ENCODE measurements at regions of chr18 and their contacts with region 1.

Region 1: DNA sequence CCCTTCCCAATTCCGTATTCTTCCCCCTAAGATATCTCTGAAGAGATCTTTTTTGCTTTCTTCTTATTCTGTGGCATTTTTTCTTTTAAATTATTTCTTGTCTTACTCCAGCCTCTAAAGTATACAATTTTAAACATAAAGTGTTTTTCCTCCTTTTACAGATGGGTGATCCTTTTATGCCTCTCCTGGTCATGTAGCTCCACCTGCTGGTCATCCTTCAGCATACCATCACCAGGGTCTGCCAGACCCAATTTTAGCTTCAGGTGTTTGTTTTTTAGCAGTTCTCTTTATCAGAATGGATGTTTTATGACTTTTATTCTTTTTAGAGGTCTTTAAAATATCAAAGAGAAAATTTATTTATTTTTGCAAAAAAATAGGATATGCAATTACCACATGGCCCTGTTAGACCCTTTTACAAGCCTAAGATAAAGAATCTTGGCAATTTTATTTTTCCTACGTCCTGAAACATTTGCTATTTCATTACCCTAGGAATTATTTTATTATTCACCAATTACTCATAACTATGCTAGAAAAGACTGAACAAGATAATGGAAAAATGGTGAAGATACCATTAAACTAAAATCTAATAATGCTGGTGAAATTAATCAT is 55.5 kb downstream of the PIGN start:
- DNase-seq: peak; percentile 63
- H3K4me3 Mint-ChIP-seq: no peak overlapping the region
- H3K27ac Mint-ChIP-seq: no peak overlapping the region
- H3K4me1 Mint-ChIP-seq: peaks cover 7% of the 10 kb centered on the region
- H3K27me3 Mint-ChIP-seq: no peaks in the 10 kb centered on the region

Region 2: GRCh38 chr18:61581578-61582201 is 549.7 kb before region 1 on chr18:
- CTCF ChIA-PET with region 1: interaction called, 18 read pairs
- POLR2A ChIA-PET with region 1: no interaction called
- DNase-seq: peak; percentile 62
- H3K4me3 Mint-ChIP-seq: no peak overlapping the region
- H3K27ac Mint-ChIP-seq: no peak overlapping the region
- H3K4me1 Mint-ChIP-seq: peaks cover 4% of the 10 kb centered on the region
- H3K27me3 Mint-ChIP-seq: peaks cover 26% of the 10 kb centered on the region

Region 3: DNA sequence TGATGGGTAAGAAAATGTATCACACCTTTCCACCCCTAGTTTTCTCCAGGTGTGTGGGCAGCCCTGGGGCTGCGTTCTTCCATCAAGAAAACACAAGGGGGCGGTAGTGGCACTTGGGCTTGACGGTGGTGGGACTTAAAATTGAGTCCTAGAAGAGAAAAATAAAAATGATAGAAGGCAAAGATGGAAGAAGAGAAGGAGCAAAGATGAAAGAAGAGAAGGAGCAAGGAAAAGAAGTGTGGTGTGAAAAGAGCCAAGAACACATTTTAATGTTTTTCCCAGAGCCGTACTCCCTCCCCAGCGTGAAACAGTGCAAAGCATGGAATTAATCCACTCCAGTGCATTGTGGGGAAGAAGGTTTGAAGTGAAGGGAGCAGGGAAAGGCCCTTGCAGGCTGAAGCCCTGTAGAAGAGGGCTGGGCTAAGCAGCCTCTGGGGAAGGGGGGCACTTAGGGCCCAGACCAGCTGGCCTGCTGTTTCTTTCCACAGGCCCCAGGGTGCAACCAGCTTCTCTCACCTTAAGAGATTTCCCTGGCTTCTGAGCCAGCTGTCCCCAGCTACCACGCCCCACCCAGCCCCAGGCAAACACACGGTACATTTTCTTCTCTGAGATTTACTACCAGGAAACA is 495.4 kb before region 1 on chr18:
- CTCF ChIA-PET with region 1: interaction called, 27 read pairs
- POLR2A ChIA-PET with region 1: no interaction called
- DNase-seq: peak; percentile 25
- H3K4me3 Mint-ChIP-seq: no peak overlapping the region
- H3K27ac Mint-ChIP-seq: no peak overlapping the region
- H3K4me1 Mint-ChIP-seq: no peaks in the 10 kb centered on the region
- H3K27me3 Mint-ChIP-seq: no peaks in the 10 kb centered on the region

Region 4: DNA sequence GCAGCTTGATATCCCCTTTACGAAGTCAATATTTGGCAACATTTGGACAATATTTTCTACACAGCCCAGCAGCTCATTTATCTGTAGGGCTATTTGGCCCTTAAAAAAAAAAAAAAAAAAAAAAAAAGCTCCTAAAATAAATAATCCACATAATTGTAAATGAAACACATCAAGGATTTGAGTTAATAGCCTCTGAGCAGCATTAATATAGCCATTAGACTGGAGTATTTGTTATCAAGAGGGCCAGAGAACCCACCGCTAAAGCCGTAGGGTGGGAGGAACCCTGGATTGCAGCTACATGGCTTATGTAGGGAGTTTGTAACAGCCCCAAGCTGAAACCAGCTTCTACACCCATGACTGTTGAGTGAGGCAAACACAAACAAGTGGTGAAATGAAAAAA is 323.1 kb before region 1 on chr18:
- CTCF ChIA-PET with region 1: no interaction called
- POLR2A ChIA-PET with region 1: no interaction called
- DNase-seq: no peak
- H3K4me3 Mint-ChIP-seq: no peak overlapping the region
- H3K27ac Mint-ChIP-seq: no peak overlapping the region
- H3K4me1 Mint-ChIP-seq: no peaks in the 10 kb centered on the region
- H3K27me3 Mint-ChIP-seq: no peaks in the 10 kb centered on the region

Region 5: DNA sequence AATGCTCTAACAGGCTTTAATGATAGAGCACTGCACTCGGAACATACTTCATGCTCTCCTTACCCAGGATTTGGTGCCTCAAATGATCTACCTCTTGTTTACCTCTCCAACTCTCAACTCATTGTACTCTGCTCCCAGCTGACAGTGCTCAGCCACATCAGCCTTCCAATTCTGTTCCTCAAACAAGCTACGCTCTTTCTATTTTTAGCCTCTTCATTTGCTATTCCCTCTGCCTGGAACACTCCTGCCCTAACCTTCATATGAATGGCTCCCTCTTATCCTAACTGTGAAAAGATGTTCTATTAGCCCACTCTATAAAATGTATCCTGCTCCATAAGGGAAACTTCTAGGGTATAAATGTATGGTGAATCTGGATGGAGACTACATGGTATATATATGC is 12.9 kb after region 1 on chr18:
- CTCF ChIA-PET with region 1: interaction called, 14 read pairs
- POLR2A ChIA-PET with region 1: no interaction called
- DNase-seq: no peak
- H3K4me3 Mint-ChIP-seq: no peak overlapping the region
- H3K27ac Mint-ChIP-seq: no peak overlapping the region
- H3K4me1 Mint-ChIP-seq: no peaks in the 10 kb centered on the region
- H3K27me3 Mint-ChIP-seq: no peaks in the 10 kb centered on the region